ENCODE measurements at regions of chr11 and their contacts with region 1.

Region 1: DNA sequence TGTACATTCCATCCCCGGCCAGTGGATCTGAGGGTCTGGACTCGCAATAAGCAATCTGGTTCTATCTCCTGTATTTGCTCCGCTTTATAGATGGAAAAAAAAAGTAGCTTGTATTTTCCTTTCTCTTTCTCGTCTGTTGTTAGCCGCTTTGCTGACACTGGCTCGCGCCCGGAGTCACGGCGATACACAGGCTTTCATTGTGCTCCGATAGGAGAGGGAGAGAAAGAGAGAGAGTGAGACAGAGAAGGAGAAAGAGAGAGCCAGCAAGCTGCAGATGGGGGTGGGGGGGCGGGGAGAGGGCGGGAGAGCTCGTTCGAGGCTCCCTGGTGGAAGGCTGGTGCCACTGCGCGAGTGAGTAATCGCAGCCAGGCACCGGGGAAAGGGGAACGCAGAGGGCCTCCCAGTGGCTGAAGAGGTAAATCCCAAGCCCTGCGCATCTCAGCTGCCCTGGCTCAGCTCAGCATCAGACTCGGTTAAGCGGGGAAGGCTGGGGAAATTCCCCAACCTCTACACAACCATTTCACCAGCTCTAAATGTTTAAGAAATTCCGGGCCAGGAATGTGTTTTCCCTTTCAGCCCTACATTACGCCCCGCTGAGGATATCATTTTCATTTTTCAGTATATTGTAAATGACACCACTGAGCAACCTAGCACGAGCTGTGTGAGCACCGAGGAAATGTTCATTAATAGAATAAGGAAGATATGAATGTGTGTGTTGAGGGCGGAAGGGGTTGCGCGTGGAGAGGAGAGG is at the start of gene MAML2:
- DNase-seq: peak; percentile 85
- H3K4me3 Mint-ChIP-seq: peak within 1 kb of the TSS; percentile 94
- H3K27ac Mint-ChIP-seq: peak within 1 kb of the TSS; percentile 89
- H3K4me1 Mint-ChIP-seq: peaks cover 49% of the 10 kb centered on the region
- H3K27me3 Mint-ChIP-seq: no peaks in the 10 kb centered on the region
- total RNA-seq, gene MAML2: 10.0 and 10.1 TPM in 2 replicates

Region 2: DNA sequence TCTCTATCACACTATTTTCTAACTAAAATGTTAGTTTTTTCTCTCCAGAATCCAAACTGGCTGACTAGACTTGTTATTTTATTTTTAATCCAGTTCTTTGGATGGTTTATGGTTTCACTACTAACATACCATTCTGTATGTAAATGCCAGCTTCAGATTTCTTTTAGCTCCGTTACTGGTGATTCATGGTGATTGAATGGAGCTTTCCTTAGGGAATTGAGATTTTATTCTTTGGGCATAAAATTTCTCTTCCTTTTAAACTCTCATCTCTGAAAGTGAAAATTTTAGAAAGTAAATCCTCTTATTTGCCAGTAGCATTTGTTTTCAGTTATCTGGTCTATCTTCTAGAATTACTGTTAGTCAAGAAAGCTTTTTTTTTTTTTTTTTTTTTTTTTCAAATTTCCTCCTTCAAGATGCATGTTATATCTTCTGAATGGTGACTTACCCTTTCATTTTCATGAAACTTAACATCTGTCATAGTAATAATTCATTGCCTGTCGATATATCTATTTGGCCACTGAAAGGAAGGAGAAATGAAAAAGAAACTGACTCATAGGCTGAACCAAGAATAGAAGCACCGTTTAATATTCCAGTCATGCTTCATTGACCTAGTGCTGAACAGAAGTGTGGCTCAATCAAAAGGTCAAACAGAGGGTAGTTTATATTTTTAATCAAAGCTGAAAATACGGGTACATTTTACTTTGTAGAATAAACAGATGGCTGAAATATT is 1247.1 kb before region 1 on chr11:
- intact Hi-C with region 1: loop called (anchors 5 kb)
- DNase-seq: no peak
- H3K4me3 Mint-ChIP-seq: peak overlapping the region; percentile 46
- H3K27ac Mint-ChIP-seq: peak overlapping the region; percentile 67
- H3K4me1 Mint-ChIP-seq: peaks cover 64% of the 10 kb centered on the region
- H3K27me3 Mint-ChIP-seq: no peaks in the 10 kb centered on the region

Region 3: GRCh38 chr11:96012086-96012824 is 330.9 kb before region 1 on chr11:
- intact Hi-C with region 1: loop called (anchors 1 kb)
- DNase-seq: peak; percentile 20
- H3K4me3 Mint-ChIP-seq: no peak overlapping the region
- H3K27ac Mint-ChIP-seq: peak overlapping the region; percentile 75
- H3K4me1 Mint-ChIP-seq: peaks cover 49% of the 10 kb centered on the region
- H3K27me3 Mint-ChIP-seq: no peaks in the 10 kb centered on the region

Region 4: GRCh38 chr11:96155627-96156378 is 187.3 kb before region 1 on chr11:
- intact Hi-C with region 1: loop called (anchors 1 kb)
- DNase-seq: peak; percentile 41
- H3K4me3 Mint-ChIP-seq: peak overlapping the region; percentile 61
- H3K27ac Mint-ChIP-seq: peak overlapping the region; percentile 94
- H3K4me1 Mint-ChIP-seq: peaks cover 55% of the 10 kb centered on the region
- H3K27me3 Mint-ChIP-seq: no peaks in the 10 kb centered on the region

Region 5: DNA sequence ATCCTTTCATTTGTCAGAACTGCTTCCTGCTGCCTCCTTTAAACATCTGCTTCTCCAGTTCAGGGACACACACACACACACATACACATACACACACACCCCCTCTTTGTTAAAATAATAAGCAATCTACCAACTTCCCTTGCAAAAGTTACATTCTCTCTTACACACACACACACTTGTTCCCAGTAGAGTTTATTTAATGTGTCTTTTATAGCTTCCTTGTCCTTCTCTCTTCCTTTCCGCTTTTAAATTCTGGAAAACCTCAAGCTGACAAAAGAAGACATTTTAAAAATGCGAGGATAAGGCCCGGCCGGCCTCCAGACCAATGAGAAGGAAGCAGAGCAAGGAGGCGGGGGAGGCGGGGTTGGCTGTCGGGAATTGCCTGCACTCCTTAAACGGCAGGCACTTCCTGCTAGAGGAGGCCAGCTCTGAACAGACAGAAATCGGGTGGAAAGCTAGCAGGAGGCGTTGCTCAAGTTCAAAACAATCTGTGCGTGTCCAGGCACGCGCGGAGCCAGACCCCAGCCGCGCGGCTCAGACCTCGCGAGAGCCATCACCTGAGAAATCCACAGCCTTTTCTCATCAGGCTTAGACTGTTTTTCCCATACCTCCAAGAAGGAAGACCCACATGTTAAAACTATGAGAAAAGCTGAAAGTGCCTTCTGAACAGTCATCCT is 100.0 kb before region 1 on chr11:
- intact Hi-C with region 1: loop called (anchors 1 kb)
- DNase-seq: peak; percentile 78
- H3K4me3 Mint-ChIP-seq: peak overlapping the region; percentile 79
- H3K27ac Mint-ChIP-seq: peak overlapping the region; percentile 94
- H3K4me1 Mint-ChIP-seq: peaks cover 46% of the 10 kb centered on the region
- H3K27me3 Mint-ChIP-seq: no peaks in the 10 kb centered on the region

Region 6: DNA sequence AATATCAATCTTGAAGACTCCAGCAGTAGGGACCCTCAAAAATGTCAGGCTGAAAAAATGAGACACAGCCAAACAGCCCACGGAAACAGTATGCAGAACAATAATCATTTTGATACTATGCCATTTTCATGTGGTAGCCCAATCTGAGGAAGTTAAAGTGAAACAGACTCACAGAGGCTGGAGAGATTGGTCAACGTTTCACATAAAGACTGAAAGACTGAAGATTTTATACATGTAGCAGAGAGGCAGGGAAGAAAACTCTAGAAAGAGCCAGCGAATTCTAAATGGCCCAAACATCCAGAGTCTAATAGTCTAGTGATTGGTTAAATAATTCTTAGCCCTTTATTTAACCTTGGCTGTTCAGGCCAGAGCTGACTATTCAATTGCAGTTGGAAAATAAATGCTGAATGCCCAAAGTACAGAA is 49.5 kb before region 1 on chr11:
- intact Hi-C with region 1: loop called (anchors 2 kb)
- DNase-seq: no peak
- H3K4me3 Mint-ChIP-seq: no peak overlapping the region
- H3K27ac Mint-ChIP-seq: no peak overlapping the region
- H3K4me1 Mint-ChIP-seq: peaks cover 44% of the 10 kb centered on the region
- H3K27me3 Mint-ChIP-seq: no peaks in the 10 kb centered on the region